ENCODE measurements at regions of chr1 and their contacts with region 1.

Region 1: DNA sequence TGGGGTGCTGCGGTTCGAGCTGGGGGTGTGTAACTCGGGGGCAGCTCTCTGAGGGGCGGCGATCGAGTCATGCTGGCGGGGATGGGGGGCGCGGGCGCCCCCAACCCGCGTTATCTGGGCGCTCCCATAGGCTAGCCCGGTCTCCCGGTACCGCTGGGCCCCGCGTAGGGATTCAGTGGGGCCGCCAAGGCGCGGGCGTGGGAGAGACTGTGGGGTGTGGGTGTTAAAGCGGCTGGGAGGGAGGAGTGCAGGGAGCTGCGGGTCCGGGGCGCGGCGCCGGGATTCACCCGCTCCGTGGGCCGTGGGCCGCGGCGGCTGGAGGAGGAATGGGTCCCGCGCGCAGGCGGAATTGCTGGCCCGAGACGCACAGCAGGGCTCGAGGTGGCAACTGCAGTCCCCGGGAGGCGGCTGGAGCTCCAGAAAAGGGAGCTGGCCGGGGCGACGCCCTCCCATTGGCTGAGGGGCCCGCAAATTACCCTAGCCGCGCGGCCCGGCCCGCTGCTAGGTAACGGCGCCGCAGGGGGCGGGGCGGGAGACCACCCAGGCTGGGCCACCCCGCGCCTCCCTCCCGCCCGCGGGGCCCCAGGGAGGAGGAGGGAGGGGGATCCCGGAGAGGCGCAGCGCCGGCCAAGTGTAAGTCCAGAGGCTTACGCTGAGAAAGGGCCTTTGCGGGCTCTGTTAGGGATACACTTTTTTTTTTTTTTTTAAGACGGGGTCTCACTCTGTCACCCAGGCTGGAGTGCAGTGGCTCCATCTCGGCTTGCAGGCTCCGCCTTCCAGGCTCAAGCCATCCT is at the start of gene PTCH2:
- DNase-seq: peak in 5 of 6 donors; percentile 40 to 80 (median 64)
- ATAC-seq: peak; percentile 84 to 92 (median 90)
- H3K4me3 ChIP-seq: peak within 1 kb of the TSS; percentile 21 to 57 (median 29)
- H3K27ac ChIP-seq: no peak within 1 kb of the TSS
- H3K4me1 ChIP-seq: no peaks in the 10 kb centered on the region
- H3K27me3 ChIP-seq: no peaks in the 10 kb centered on the region
- CTCF ChIP-seq: no peak
- total RNA-seq, gene PTCH2: 0.16 to 0.90 (median 0.34) TPM

Region 2: GRCh38 chr1:44786138-44786840 is 56.8 kb before region 1 on chr1:
- intact Hi-C with region 1: loop called in 1 of 3 experiments (anchors 5 kb)
- DNase-seq: peak; percentile 70 to 94 (median 86)
- ATAC-seq: peak; percentile 82 to 92 (median 88)
- H3K4me3 ChIP-seq: peak overlapping the region; percentile 10 to 53 (median 39)
- H3K27ac ChIP-seq: peak overlapping the region; percentile 43 to 61 (median 52)
- H3K4me1 ChIP-seq: peaks cover 0 to 10% (median 0%) of the 10 kb centered on the region in 3 donors
- H3K27me3 ChIP-seq: no peaks in the 10 kb centered on the region
- CTCF ChIP-seq: peak; percentile 96 to 100 (median 99)